ENCODE measurements at regions of chr12 and their contacts with region 1.

Region 1: DNA sequence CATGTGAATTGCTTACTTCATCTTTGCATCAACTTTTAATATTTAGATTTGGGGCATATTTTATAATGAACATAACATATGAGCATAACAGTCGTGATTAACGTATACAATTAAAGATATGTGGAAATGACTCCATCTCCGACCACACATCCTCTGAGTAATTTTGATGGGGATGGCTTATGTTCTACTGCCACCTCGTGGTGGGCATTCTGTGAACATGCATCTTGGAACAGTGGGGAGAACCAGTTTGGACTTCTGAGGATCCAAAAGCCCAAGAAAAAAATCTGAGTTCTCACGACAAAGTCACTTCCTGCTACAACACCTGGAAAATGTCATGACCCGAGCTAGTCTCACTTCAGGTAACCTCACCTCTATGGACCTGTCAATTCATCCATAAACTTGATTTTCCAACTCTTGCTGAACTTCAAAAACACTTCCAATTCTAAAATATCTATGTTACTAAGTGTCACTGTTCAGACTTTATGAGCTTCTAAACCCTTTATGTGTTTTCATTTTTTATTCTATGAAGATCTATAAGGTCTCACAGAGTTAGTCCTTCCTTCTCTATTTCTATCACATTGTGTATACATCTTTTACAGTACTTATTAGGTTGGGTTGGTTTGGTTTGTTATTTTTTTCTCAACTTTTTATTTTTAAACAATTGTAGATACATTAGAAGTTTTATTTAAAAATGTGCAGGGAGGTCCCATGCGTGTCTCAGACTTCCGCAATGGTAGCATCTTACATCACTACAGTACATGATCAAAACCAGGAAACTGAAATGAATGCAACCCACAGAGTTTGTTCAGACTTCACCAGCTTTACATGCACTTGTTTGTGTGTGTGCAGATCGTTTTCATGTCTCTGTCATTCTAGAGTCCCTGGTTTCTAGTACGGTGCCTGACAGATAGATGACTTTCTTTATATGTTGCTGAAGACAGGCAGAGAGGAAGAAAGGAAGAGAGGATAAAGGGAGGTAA is 38.2 kb upstream of the STAB2 start:
- DNase-seq: peak in 1 of 2 experiments; percentile 79
- H3K4me3 ChIP-seq: no peak overlapping the region
- H3K27ac ChIP-seq: no peak overlapping the region
- H3K4me1 ChIP-seq: no peaks in the 10 kb centered on the region
- H3K27me3 ChIP-seq: peaks cover 0 to 1% (median 0%) of the 10 kb centered on the region in 4 experiments; a peak in 1 of 7 replicates
- CTCF ChIP-seq: peak; percentile 49 to 85 (median 75)
- EP300 ChIP-seq: no peak
- POLR2A ChIP-seq: no peak
- RAD21 ChIP-seq: peak; percentile 98 to 99

Region 2: GRCh38 chr12:102879144-102879763 is 669.7 kb before region 1 on chr12:
- CTCF ChIA-PET with region 1: interaction called, 35 read pairs
- POLR2A ChIA-PET with region 1: no interaction called
- DNase-seq: peak; percentile 47 to 57
- H3K4me3 ChIP-seq: no peak overlapping the region; a peak in 1 of 8 replicates
- H3K27ac ChIP-seq: no peak overlapping the region
- H3K4me1 ChIP-seq: peaks cover 0 to 3% (median 0%) of the 10 kb centered on the region in 4 experiments; a peak in 2 of 7 replicates
- H3K27me3 ChIP-seq: no peaks in the 10 kb centered on the region
- CTCF ChIP-seq: peak; percentile 46 to 97 (median 95)
- EP300 ChIP-seq: no peak
- POLR2A ChIP-seq: no peak
- RAD21 ChIP-seq: peak; percentile 92 to 93

Region 3: DNA sequence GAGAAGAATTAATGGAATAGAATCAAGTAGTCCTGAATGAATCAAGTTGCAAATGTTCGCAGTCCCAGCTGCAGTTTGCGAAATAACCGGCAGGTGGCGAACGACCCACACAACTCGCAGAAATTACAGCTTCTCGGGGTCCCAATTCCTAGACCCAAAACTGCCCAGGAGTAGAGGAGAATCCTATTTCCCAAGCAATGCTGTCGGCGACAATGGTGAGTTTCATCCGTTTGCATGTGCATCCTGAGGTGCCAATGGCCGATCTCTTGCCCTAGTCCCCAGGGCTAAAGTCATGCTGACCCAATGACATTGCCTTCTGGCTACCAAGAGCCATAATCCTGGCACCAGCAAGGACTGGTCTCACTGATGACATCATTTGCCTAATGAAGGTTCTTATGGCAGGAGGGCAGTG is 600.0 kb before region 1 on chr12:
- CTCF ChIA-PET with region 1: interaction called, 85 read pairs
- POLR2A ChIA-PET with region 1: no interaction called
- DNase-seq: peak in 1 of 2 experiments; percentile 94
- H3K4me3 ChIP-seq: no peak overlapping the region
- H3K27ac ChIP-seq: no peak overlapping the region
- H3K4me1 ChIP-seq: peaks cover 5 to 14% (median 6%) of the 10 kb centered on the region in 4 experiments
- H3K27me3 ChIP-seq: peaks cover 42 to 54% (median 49%) of the 10 kb centered on the region in 4 experiments
- CTCF ChIP-seq: peak; percentile 83 to 91 (median 84)
- EP300 ChIP-seq: no peak
- POLR2A ChIP-seq: no peak
- RAD21 ChIP-seq: peak; percentile 95

Region 4: GRCh38 chr12:103326190-103326589 is 222.7 kb before region 1 on chr12:
- CTCF ChIA-PET with region 1: interaction called, 41 read pairs
- POLR2A ChIA-PET with region 1: no interaction called
- DNase-seq: no peak
- H3K4me3 ChIP-seq: no peak overlapping the region
- H3K27ac ChIP-seq: no peak overlapping the region
- H3K4me1 ChIP-seq: no peaks in the 10 kb centered on the region
- H3K27me3 ChIP-seq: no peaks in the 10 kb centered on the region
- CTCF ChIP-seq: peak in 2 of 3 experiments; percentile 58 to 67; a peak in 3 of 4 replicates
- EP300 ChIP-seq: no peak
- POLR2A ChIP-seq: no peak
- RAD21 ChIP-seq: peak; percentile 71 to 78

Region 5: DNA sequence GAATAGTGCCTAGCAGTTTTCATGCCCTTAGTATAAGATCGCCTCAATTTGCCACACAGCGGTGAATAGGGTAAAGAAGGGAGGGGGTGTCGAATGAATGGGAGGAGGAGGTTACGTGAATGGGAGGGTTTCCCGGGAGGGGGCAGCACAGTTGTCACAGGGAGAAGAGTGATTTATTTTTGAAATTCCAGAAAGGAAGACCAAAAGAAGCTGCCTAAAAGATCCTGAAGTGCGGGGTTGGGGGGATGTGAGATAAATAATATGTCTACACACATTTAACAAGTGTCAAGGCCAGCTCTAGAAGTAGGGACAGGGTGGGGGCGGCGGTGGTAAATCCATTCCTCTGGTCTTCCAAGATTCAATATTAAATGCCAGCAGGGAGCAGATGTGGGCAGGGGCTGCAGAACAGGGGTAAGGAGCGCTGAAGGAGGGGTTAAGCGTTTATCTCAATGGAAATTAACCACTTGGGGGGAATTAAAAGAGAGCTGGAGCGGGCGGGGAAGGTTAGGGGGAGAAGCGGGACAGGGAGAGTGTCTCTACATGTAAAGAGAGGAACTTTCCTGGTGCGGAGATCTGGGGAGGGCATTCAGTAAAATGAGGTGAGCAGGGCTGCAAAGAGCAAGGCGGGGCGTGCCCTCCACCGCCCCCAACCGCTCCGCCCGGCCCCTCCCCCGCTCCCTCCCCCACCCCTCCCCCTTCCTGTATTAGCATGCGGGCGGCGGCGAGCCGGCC is 54.0 kb before region 1 on chr12:
- CTCF ChIA-PET with region 1: interaction called, 10 read pairs
- POLR2A ChIA-PET with region 1: no interaction called
- DNase-seq: peak in 1 of 2 experiments; percentile 52
- H3K4me3 ChIP-seq: peak overlapping the region; percentile 61 to 75 (median 62)
- H3K27ac ChIP-seq: no peak overlapping the region
- H3K4me1 ChIP-seq: peaks cover 2 to 12% (median 3%) of the 10 kb centered on the region in 4 experiments; a peak in 6 of 7 replicates
- H3K27me3 ChIP-seq: peaks cover 0 to 4% (median 0%) of the 10 kb centered on the region in 4 experiments; a peak in 1 of 7 replicates
- CTCF ChIP-seq: no peak
- EP300 ChIP-seq: no peak
- POLR2A ChIP-seq: no peak
- RAD21 ChIP-seq: no peak

Region 6: GRCh38 chr12:103523771-103524170 is 25.1 kb before region 1 on chr12:
- CTCF ChIA-PET with region 1: interaction called, 15 read pairs
- POLR2A ChIA-PET with region 1: no interaction called
- DNase-seq: no peak
- H3K4me3 ChIP-seq: no peak overlapping the region
- H3K27ac ChIP-seq: no peak overlapping the region
- H3K4me1 ChIP-seq: no peaks in the 10 kb centered on the region
- H3K27me3 ChIP-seq: no peaks in the 10 kb centered on the region
- CTCF ChIP-seq: no peak
- EP300 ChIP-seq: no peak
- POLR2A ChIP-seq: no peak
- RAD21 ChIP-seq: no peak

Region 7: GRCh38 chr12:103538397-103538796 is 10.5 kb before region 1 on chr12:
- CTCF ChIA-PET with region 1: interaction called, 15 read pairs
- POLR2A ChIA-PET with region 1: no interaction called
- DNase-seq: no peak
- H3K4me3 ChIP-seq: no peak overlapping the region
- H3K27ac ChIP-seq: no peak overlapping the region
- H3K4me1 ChIP-seq: no peaks in the 10 kb centered on the region
- H3K27me3 ChIP-seq: no peaks in the 10 kb centered on the region
- CTCF ChIP-seq: no peak
- EP300 ChIP-seq: no peak
- POLR2A ChIP-seq: no peak
- RAD21 ChIP-seq: no peak

Measured in H1 (cell line).